T-cell (primary cell): ENCODE measurements at regions of chr12 and their contacts with region 1.

Region 1: GRCh38 chr12:48969833-48970701 is 1.5 kb downstream of the WNT10B start:
- DNase-seq: peak in 12 of 35 experiments; percentile 8 to 69 (median 34)
- ATAC-seq: peak; percentile 78 to 82 (median 78)
- H3K4me3 ChIP-seq: peak overlapping the region; percentile 2 to 64
- H3K4me3 Mint-ChIP-seq: peak overlapping the region; percentile 34 to 82 (median 58)
- H3K27ac ChIP-seq: no peak overlapping the region
- H3K27ac Mint-ChIP-seq: no peak overlapping the region
- H3K4me1 ChIP-seq: peaks cover 7 to 43% of the 10 kb centered on the region in 2 experiments
- H3K4me1 Mint-ChIP-seq: peaks cover 26 to 35% (median 29%) of the 10 kb centered on the region in 3 donors
- H3K27me3 ChIP-seq: peaks cover 6 to 53% of the 10 kb centered on the region in 2 experiments
- H3K27me3 Mint-ChIP-seq: peaks cover 32 to 42% of the 10 kb centered on the region in 2 donors

Region 2: GRCh38 chr12:48917857-48918537 is 52.1 kb before region 1 on chr12:
- CTCF ChIA-PET with region 1: interaction called in 1 of 2 experiments, 13 read pairs
- POLR2A ChIA-PET with region 1: no interaction called
- DNase-seq: peak in 33 of 35 experiments; percentile 16 to 68 (median 43)
- ATAC-seq: peak; percentile 92 to 98 (median 96)
- H3K4me3 ChIP-seq: peak overlapping the region; percentile 62 to 64
- H3K4me3 Mint-ChIP-seq: peak overlapping the region; percentile 77 to 91 (median 86)
- H3K27ac ChIP-seq: peak overlapping the region; percentile 76
- H3K27ac Mint-ChIP-seq: peak overlapping the region; percentile 97 to 98
- H3K4me1 ChIP-seq: peaks cover 16 to 45% of the 10 kb centered on the region in 2 experiments
- H3K4me1 Mint-ChIP-seq: peaks cover 39 to 49% (median 47%) of the 10 kb centered on the region in 3 donors
- H3K27me3 ChIP-seq: no peaks in the 10 kb centered on the region
- H3K27me3 Mint-ChIP-seq: no peaks in the 10 kb centered on the region

Region 3: GRCh38 chr12:49200919-49201594 is 231.0 kb after region 1 on chr12:
- CTCF ChIA-PET with region 1: interaction called in 1 of 2 experiments, 22 read pairs
- POLR2A ChIA-PET with region 1: no interaction called
- DNase-seq: peak in 4 of 35 experiments; percentile 9 to 66 (median 19)
- ATAC-seq: peak; percentile 55 to 97 (median 82)
- H3K4me3 ChIP-seq: no peak overlapping the region
- H3K4me3 Mint-ChIP-seq: peak overlapping the region in 1 of 3 donors; percentile 2
- H3K27ac ChIP-seq: peak overlapping the region; percentile 38
- H3K27ac Mint-ChIP-seq: peak overlapping the region; percentile 15 to 46
- H3K4me1 ChIP-seq: peaks cover 3 to 5% of the 10 kb centered on the region in 2 experiments
- H3K4me1 Mint-ChIP-seq: peaks cover 13 to 14% (median 14%) of the 10 kb centered on the region in 3 donors
- H3K27me3 ChIP-seq: no peaks in the 10 kb centered on the region
- H3K27me3 Mint-ChIP-seq: peaks cover 2 to 4% of the 10 kb centered on the region in 2 donors